ENCODE measurements at regions of chr14 and their contacts with region 1.

Region 1: GRCh38 chr14:58166005-58166983 is 14.3 kb upstream of the ARMH4 start:
- DNase-seq: peak; percentile 76 to 94 (median 89)
- H3K4me3 ChIP-seq: no peak overlapping the region
- H3K27ac ChIP-seq: no peak overlapping the region
- H3K4me1 ChIP-seq: no peaks in the 10 kb centered on the region
- H3K27me3 ChIP-seq: no peaks in the 10 kb centered on the region
- CTCF ChIP-seq: peak; percentile 54 to 84 (median 62)
- EP300 ChIP-seq: no peak
- POLR2A ChIP-seq: no peak

Region 2: GRCh38 chr14:57617510-57617909 is 548.8 kb before region 1 on chr14:
- intact Hi-C with region 1: no loop called
- DNase-seq: no peak
- H3K4me3 ChIP-seq: no peak overlapping the region
- H3K27ac ChIP-seq: no peak overlapping the region
- H3K4me1 ChIP-seq: no peaks in the 10 kb centered on the region
- H3K27me3 ChIP-seq: no peaks in the 10 kb centered on the region
- CTCF ChIP-seq: no peak
- EP300 ChIP-seq: no peak
- POLR2A ChIP-seq: no peak

Region 3: DNA sequence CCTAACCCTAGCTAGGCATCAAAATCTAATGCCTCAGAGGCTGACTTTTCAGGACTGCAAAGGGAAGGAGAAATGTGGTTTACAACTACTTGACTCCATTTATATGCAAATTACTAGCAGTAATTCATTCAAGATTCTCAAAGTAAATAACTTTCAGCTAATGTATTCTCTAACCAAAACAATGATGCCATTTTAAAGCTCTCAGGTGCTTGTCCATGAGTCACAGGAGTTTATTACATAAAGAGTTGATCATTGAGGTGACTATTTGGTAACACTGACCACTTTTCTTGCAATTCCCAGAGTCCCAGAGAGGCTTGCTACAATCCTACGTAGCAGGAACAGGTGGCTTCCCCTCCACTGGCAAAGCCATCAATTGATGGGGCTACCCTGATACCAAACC is 191.4 kb before region 1 on chr14:
- intact Hi-C with region 1: no loop called
- DNase-seq: no peak
- H3K4me3 ChIP-seq: no peak overlapping the region
- H3K27ac ChIP-seq: no peak overlapping the region
- H3K4me1 ChIP-seq: no peaks in the 10 kb centered on the region
- H3K27me3 ChIP-seq: no peaks in the 10 kb centered on the region
- CTCF ChIP-seq: no peak
- EP300 ChIP-seq: no peak
- POLR2A ChIP-seq: no peak

Region 4: GRCh38 chr14:58107947-58108552 is 58.2 kb before region 1 on chr14:
- intact Hi-C with region 1: loop called (anchors 2 to 10 kb)
- DNase-seq: peak; percentile 28 to 62 (median 37)
- H3K4me3 ChIP-seq: no peak overlapping the region
- H3K27ac ChIP-seq: no peak overlapping the region
- H3K4me1 ChIP-seq: no peaks in the 10 kb centered on the region
- H3K27me3 ChIP-seq: no peaks in the 10 kb centered on the region
- CTCF ChIP-seq: peak; percentile 58 to 62 (median 59)
- EP300 ChIP-seq: no peak
- POLR2A ChIP-seq: no peak